ENCODE measurements at regions of chr20 and their contacts with region 1.

Region 1: DNA sequence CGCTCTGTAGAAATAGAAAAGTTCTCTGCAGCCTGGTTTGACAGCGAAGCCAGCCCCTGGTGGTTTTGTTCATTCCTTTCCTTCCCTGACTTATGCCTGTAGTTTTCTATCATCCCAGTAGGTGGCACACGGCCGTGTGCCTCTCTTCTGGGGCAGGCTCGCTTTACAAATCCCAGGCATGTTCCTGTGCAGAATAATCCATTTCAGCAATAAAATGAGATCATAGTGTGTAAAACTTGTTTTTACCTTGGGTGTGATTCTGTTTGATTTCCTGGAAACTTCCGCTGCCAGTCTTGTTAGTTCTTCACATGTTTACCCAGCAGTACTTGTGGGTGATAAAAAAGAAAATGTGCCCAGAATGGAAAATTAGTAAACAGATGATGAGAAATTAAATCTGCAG is 7.4 kb upstream of the INSM1 start:
- H3K4me3 Mint-ChIP-seq: no peak overlapping the region
- H3K27ac Mint-ChIP-seq: no peak overlapping the region
- H3K4me1 Mint-ChIP-seq: peaks cover 26% of the 10 kb centered on the region
- H3K27me3 Mint-ChIP-seq: peaks cover 56% of the 10 kb centered on the region

Region 2: DNA sequence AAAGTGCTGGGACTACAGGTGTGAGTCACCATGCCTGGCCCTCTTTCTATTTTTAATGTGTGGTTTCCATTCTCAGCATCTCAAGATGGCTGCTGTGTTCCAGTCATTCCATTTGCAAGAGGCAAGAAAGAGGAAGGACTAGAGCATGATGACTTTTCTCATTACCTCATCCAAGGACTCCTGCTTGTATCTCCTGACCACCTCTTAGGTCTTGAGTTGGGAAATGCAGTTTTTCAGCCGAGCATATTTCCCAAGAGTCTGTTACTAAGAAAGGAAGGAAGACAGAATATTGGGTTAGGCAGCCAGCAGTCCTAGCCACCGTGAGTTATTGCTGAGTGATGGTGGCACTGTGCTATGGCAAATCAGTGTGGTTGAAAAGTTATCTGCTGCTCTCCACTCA is 100.9 kb before region 1 on chr20:
- intact Hi-C with region 1: no loop called
- H3K4me3 Mint-ChIP-seq: no peak overlapping the region
- H3K27ac Mint-ChIP-seq: peak overlapping the region; percentile 81
- H3K4me1 Mint-ChIP-seq: peaks cover 45% of the 10 kb centered on the region
- H3K27me3 Mint-ChIP-seq: no peaks in the 10 kb centered on the region

Region 3: GRCh38 chr20:20276811-20277530 is 83.5 kb before region 1 on chr20:
- intact Hi-C with region 1: loop called (anchors 10 kb)
- H3K4me3 Mint-ChIP-seq: peak overlapping the region; percentile 45
- H3K27ac Mint-ChIP-seq: peak overlapping the region; percentile 92
- H3K4me1 Mint-ChIP-seq: peaks cover 25% of the 10 kb centered on the region
- H3K27me3 Mint-ChIP-seq: no peaks in the 10 kb centered on the region

Region 4: GRCh38 chr20:20407891-20408805 is 47.7 kb after region 1 on chr20:
- intact Hi-C with region 1: loop called (anchors 2 kb)
- H3K4me3 Mint-ChIP-seq: no peak overlapping the region
- H3K27ac Mint-ChIP-seq: no peak overlapping the region
- H3K4me1 Mint-ChIP-seq: peaks cover 10% of the 10 kb centered on the region
- H3K27me3 Mint-ChIP-seq: no peaks in the 10 kb centered on the region

Region 5: GRCh38 chr20:20568604-20569205 is 208.2 kb after region 1 on chr20:
- intact Hi-C with region 1: loop called (anchors 5 kb)
- H3K4me3 Mint-ChIP-seq: no peak overlapping the region
- H3K27ac Mint-ChIP-seq: no peak overlapping the region
- H3K4me1 Mint-ChIP-seq: no peaks in the 10 kb centered on the region
- H3K27me3 Mint-ChIP-seq: no peaks in the 10 kb centered on the region